ENCODE measurements at regions of chr11 and their contacts with region 1.

Region 1: GRCh38 chr11:128472128-128473089 is 114.9 kb downstream of the ETS1 start:
- DNase-seq: peak; percentile 86
- H3K4me3 Mint-ChIP-seq: peak overlapping the region; percentile 56
- H3K27ac Mint-ChIP-seq: peak overlapping the region; percentile 97
- H3K4me1 Mint-ChIP-seq: peaks cover 95% of the 10 kb centered on the region
- H3K27me3 Mint-ChIP-seq: no peaks in the 10 kb centered on the region

Region 2: GRCh38 chr11:128172046-128172878 is 300.1 kb before region 1 on chr11:
- CTCF ChIA-PET with region 1: no interaction called
- intact Hi-C with region 1: loop called (anchors 2 kb)
- DNase-seq: peak; percentile 96
- H3K4me3 Mint-ChIP-seq: no peak overlapping the region
- H3K27ac Mint-ChIP-seq: no peak overlapping the region
- H3K4me1 Mint-ChIP-seq: peaks cover 7% of the 10 kb centered on the region
- H3K27me3 Mint-ChIP-seq: no peaks in the 10 kb centered on the region

Region 3: DNA sequence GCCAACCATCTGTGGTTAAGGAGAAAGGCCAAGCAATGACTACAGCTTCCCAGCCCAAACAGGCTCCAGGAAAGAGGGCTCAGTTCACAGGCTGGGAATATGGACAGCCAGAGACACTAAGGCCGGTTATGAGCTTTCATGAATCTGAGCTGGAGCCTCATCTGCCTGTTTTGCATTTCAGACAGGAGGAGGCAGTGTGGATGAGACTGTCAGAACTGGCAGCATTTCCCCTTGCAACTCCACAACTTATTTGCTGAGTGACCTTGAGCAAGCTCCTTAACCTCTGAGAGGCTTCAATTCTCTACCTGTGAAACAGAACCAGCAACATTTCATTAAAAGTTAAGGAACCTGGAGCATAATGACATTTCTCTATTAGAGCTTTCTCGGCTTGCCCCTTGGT is 149.0 kb before region 1 on chr11:
- CTCF ChIA-PET with region 1: interaction called, 20 read pairs
- intact Hi-C with region 1: loop called (anchors 1 kb)
- DNase-seq: peak; percentile 72
- H3K4me3 Mint-ChIP-seq: peak overlapping the region; percentile 32
- H3K27ac Mint-ChIP-seq: peak overlapping the region; percentile 90
- H3K4me1 Mint-ChIP-seq: peaks cover 87% of the 10 kb centered on the region
- H3K27me3 Mint-ChIP-seq: no peaks in the 10 kb centered on the region

Region 4: DNA sequence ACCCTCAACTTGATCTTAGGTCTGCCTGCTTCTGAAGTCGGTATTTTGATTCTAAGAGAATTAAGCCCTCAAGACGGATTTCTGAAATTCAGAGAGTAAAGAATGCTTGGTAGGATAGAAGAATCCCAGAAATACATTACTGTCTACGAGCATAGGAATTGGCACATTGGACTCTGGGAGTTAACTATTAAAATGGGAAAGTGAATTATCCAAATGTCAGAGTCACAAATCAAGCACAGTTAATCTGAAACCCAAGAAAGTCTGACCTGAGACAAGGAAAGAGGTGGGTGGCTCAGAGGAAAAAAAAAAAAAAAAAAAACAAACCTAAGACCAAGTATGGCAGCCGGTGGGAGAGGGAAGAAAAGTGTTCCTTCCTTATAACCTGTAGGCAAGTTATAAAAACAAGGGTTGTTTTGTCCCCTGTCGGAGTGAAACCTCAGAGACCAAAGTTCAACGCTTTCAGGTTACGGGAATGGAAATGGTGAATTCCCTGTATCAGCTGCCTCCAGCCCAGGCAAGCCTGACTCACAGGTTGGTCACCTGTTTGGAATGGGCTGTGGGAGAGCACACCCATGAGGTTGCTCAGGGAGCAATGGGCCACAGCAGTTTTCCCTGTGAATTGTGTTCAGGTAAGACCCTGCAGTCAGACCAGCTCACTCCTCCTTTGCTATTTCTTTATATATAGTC is 24.1 kb before region 1 on chr11:
- CTCF ChIA-PET with region 1: no interaction called
- intact Hi-C with region 1: no loop called
- DNase-seq: peak; percentile 48
- H3K4me3 Mint-ChIP-seq: no peak overlapping the region
- H3K27ac Mint-ChIP-seq: no peak overlapping the region
- H3K4me1 Mint-ChIP-seq: peaks cover 49% of the 10 kb centered on the region
- H3K27me3 Mint-ChIP-seq: no peaks in the 10 kb centered on the region

Region 5: DNA sequence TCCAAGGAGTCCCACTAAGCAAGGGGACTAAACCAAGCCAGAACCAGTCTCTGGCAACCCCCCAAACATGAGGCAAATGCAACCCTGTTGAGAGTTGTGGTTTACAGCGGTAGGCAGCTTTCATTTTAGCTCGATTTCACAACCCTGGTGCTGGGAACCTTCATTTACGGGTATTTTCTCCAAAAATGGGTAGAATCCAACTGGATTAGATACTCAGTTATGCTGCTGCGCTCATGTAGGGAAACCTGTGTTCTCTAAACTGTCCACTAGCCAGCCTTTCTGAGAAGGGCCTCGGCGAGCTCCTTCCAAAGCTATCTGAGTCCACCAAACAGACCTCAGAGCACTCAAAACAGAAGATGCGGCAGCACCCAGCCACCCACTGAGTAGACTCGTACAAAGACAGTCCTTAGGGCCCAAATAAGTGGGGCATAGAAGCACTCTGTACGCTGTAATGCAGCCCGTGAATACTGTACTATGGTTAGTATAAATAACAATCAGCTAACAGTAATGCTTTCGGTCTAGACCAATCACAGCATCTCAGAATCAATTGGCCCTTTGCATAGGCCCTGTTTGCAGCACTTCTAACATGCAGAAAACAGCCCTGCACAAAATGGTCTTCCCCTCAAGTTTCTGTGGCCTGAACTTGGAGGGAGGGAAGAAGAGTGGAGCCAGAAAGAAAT is 10.2 kb after region 1 on chr11:
- CTCF ChIA-PET with region 1: interaction called, 10 read pairs
- intact Hi-C with region 1: loop called (anchors 1 kb)
- DNase-seq: peak; percentile 72
- H3K4me3 Mint-ChIP-seq: peak overlapping the region; percentile 68
- H3K27ac Mint-ChIP-seq: peak overlapping the region; percentile 95
- H3K4me1 Mint-ChIP-seq: peaks cover 93% of the 10 kb centered on the region
- H3K27me3 Mint-ChIP-seq: no peaks in the 10 kb centered on the region

Region 6: DNA sequence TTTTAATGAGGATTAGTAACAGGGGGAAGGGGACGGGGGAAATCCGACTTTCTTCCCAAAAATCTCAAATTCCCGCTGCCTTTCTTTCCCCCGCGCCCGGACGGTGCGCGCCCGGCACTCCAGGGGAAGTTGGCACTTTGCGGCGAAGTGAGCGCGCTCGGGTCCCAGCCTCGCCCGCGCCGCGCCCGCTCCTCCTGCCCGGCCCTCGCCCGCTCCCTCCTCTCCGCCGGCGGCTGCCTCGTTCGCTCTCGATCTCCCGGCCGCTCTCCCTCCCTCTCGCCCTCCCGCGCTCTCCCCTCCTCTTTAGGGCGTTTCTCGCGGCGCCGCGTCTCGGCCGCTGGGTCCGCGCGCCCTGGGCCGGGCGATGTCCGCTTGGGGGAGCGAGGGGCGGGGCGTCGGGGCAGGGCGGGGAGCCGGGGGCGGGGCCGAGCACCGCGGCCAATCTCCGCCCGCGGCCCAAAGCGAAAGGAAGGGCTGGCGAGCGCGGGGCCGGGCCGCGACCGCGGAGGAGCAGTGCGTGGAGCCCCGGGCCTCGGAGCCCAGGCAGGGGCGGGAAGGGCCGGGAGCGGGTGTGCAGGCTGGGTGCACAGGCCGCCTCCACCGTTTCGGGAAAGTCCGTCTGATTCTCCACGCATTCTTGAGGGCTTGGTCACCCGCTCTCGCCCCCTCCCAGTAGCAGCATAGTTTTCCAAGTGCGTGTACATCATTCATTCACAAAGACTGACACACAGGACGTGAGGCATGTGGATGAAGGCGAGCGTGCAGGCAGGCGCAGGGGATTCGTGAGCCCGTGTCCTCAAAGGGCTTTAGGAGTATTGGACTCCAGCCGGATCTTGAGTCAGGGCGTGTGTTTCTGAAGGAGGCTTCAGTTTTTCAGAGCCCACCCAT is 49.9 kb after region 1 on chr11:
- CTCF ChIA-PET with region 1: interaction called, 11 read pairs
- intact Hi-C with region 1: loop called (anchors 1 kb)
- DNase-seq: peak; percentile 92
- H3K4me3 Mint-ChIP-seq: peak overlapping the region; percentile 96
- H3K27ac Mint-ChIP-seq: peak overlapping the region; percentile 97
- H3K4me1 Mint-ChIP-seq: peaks cover 42% of the 10 kb centered on the region
- H3K27me3 Mint-ChIP-seq: no peaks in the 10 kb centered on the region

Region 7: DNA sequence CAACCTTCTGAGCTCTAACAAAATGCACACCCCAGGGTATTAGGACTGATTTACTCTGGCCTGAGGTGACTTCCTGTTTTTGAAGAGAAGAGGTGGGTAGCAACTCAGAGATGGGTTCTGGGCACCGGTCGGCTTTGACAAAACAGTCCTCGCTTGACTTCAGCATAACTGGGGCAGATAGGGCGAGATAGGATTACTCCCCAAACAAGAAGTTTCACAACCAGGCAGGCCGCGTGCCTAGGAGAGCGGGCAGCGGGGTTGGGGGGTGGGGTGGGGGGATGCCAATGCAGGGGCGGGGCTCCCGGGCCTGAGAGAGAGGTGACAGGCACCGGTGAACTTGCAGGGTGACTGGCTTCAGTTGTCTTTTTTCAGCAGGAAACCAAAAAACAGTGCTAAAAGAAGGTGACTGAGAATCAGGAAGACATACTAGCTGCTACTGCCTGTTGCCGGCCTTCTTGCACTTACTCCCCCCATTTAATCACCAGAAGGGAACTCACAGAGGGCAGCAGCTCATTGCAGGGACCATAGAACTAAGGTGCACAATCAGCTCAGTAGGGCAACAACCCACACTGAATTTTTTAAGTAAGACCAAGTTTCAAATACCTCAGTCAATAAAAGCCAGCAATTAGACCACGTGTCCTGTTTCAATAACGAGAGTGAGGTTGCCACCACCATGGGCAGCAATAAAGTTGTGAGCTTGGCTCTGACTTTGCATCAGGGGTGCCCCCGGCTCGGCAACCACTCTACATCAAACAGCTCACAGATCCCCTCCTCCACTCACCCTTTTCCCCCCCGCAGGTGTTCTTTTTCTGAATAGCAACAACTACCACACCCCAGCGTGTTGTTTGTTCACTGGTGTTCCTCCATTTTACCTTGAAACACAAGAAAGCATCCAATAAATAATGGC is 152.1 kb after region 1 on chr11:
- CTCF ChIA-PET with region 1: interaction called, 40 read pairs
- intact Hi-C with region 1: loop called (anchors 1 kb)
- DNase-seq: peak; percentile 79
- H3K4me3 Mint-ChIP-seq: peak overlapping the region; percentile 59
- H3K27ac Mint-ChIP-seq: peak overlapping the region; percentile 89
- H3K4me1 Mint-ChIP-seq: peaks cover 92% of the 10 kb centered on the region
- H3K27me3 Mint-ChIP-seq: no peaks in the 10 kb centered on the region

Measured in activated naive CD4-positive, alpha-beta T cell treated with anti-CD3 and anti-CD28 coated beads for 36 hours (primary cell).